GM12878 (cell line): ENCODE measurements at regions of chr12 and their contacts with region 1.

Region 1: DNA sequence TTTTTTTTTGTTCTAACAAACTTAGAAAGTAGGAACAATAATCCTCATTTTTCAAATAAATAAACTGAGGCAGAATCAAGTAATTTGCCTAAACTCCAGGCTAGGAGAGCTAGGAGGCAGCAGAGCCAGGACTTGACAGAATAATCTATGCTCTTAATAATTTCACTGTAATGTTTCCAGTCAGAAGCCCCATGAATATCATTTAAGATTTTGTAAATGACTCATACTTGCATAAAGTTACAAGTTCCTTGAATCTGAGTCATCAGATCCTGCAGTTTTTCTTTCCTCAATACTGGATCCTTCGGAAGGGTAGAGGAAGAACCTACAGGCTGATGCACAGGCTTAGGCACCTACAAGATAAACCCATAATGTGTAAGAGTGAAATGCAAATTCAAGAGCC is 29.0 kb downstream of the CAPRIN2 start:
- DNase-seq: no peak
- ATAC-seq: no peak
- H3K4me3 ChIP-seq: no peak overlapping the region
- H3K27ac ChIP-seq: no peak overlapping the region
- H3K4me1 ChIP-seq: no peaks in the 10 kb centered on the region
- H3K27me3 ChIP-seq: no peaks in the 10 kb centered on the region
- CTCF ChIP-seq: no peak
- EP300 ChIP-seq: no peak
- POLR2A ChIP-seq: no peak
- RAD21 ChIP-seq: no peak

Region 2: GRCh38 chr12:30746190-30746589 is 20.5 kb after region 1 on chr12:
- CTCF ChIA-PET with region 1: interaction called, 4 read pairs
- POLR2A ChIA-PET with region 1: no interaction called
- RAD21 ChIA-PET with region 1: no interaction called
- SMC1A ChIA-PET with region 1: interaction called, 11 read pairs
- in situ Hi-C with region 1: no loop called
- intact Hi-C with region 1: no loop called
- DNase-seq: no peak
- ATAC-seq: no peak
- H3K4me3 ChIP-seq: no peak overlapping the region
- H3K27ac ChIP-seq: no peak overlapping the region
- H3K4me1 ChIP-seq: no peaks in the 10 kb centered on the region
- H3K27me3 ChIP-seq: no peaks in the 10 kb centered on the region
- CTCF ChIP-seq: no peak
- EP300 ChIP-seq: no peak
- POLR2A ChIP-seq: no peak
- RAD21 ChIP-seq: no peak

Region 3: DNA sequence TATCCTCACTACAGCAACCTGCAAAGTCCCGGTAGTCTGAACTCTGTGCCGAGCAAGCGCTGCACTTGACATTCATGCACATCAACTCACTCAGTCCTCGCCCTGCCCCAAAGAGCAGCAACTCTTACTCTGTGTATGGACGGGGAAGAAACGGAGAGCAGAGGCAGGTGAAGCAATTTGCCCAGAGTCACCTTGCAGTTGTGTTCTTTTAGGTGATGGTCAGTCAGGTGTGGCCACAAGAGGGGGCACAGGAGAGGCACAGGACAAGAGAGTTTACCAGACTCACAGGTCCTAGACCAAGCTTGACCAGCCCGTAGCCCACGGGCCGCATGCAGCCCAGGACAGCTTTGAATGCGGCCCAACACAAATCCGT is 239.9 kb after region 1 on chr12:
- CTCF ChIA-PET with region 1: no interaction called
- POLR2A ChIA-PET with region 1: no interaction called
- RAD21 ChIA-PET with region 1: no interaction called
- SMC1A ChIA-PET with region 1: no interaction called
- in situ Hi-C with region 1: no loop called
- intact Hi-C with region 1: no loop called
- DNase-seq: no peak
- ATAC-seq: no peak
- H3K4me3 ChIP-seq: no peak overlapping the region
- H3K27ac ChIP-seq: no peak overlapping the region
- H3K4me1 ChIP-seq: no peaks in the 10 kb centered on the region
- H3K27me3 ChIP-seq: peaks cover 0 to 1% of the 10 kb centered on the region in 2 experiments; a peak in 2 of 4 replicates
- CTCF ChIP-seq: 0 out of 6 replicates have a peak, but pooled peaks of 1 of the 3 experiments have one; percentile 9
- EP300 ChIP-seq: no peak
- POLR2A ChIP-seq: no peak
- RAD21 ChIP-seq: no peak

Region 4: GRCh38 chr12:31578632-31579031 is 852.9 kb after region 1 on chr12:
- CTCF ChIA-PET with region 1: no interaction called
- POLR2A ChIA-PET with region 1: no interaction called
- RAD21 ChIA-PET with region 1: no interaction called
- SMC1A ChIA-PET with region 1: no interaction called
- in situ Hi-C with region 1: no loop called
- intact Hi-C with region 1: no loop called
- DNase-seq: no peak
- ATAC-seq: no peak
- H3K4me3 ChIP-seq: no peak overlapping the region
- H3K27ac ChIP-seq: no peak overlapping the region
- H3K4me1 ChIP-seq: peaks cover 12% of the 10 kb centered on the region
- H3K27me3 ChIP-seq: no peaks in the 10 kb centered on the region
- CTCF ChIP-seq: no peak
- EP300 ChIP-seq: no peak
- POLR2A ChIP-seq: no peak
- RAD21 ChIP-seq: no peak